ENCODE measurements at regions of chr4 and their contacts with region 1.

Region 1: DNA sequence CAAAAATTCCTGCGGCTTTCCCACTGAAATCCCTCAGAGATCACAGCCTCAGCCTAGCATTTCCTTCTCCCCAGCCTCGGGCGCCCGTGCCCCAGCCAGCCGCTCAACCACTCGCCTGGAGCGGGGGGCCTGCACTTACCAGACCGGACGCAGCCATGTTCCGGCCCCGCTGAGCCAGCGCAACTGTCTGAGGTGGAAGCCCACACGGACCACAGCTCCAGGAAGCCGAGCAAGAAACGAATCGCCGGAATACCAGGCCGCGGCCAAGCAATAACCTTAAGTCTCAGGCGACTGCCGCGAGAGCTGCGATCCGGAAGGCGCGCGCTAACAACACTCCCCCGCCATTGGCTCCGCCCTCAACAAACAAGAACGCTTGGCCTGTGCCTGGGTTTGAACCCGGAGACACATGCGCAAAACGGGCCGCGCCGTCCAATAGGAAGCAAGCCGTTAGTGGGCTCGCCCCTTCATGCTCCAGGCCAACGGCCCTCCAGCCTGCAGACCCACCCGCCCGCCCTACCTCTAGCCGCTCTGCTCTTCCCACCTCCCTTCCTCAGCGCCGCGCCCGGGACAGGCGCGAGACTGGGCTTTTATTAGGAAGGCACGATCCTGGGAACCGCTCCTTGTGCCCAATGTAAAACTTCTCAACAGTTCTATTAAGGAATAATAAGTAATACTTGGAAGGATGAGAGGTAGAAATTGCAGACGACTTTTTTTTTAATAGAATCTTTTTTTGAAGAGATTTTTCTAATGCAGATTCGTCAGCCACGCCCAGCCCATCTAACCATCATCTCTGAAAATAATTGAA is at the start of gene CENPC:
- DNase-seq: peak; percentile 95
- H3K4me3 Mint-ChIP-seq: peak within 1 kb of the TSS; percentile 89
- H3K27ac Mint-ChIP-seq: peak within 1 kb of the TSS; percentile 91
- H3K4me1 Mint-ChIP-seq: peaks cover 38% of the 10 kb centered on the region
- H3K27me3 Mint-ChIP-seq: no peaks in the 10 kb centered on the region
- total RNA-seq, gene CENPC: 36.4 to 36.7 TPM

Region 2: DNA sequence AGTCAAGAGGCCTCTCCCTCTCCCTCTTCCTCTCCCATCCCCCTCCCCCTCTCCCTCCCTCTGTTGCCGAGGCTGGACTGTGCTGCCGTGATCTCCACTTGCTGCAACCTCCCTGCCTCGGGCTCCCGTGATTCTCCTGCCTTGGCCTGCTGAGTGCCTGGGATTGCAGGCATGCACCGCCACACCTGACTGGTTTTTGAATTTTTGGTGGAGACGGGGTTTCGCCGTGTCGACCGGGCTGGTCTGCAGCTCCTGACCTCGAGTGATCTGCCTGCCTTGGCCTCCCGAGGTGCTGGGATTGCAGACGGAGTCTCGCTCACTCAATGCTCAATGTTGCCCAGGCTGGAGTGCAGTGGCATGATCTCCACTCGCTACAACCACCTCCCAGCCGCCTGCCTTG is 165.2 kb before region 1 on chr4:
- CTCF ChIA-PET with region 1: no interaction called
- POLR2A ChIA-PET with region 1: no interaction called
- DNase-seq: no peak
- H3K4me3 Mint-ChIP-seq: no peak overlapping the region
- H3K27ac Mint-ChIP-seq: no peak overlapping the region
- H3K4me1 Mint-ChIP-seq: no peaks in the 10 kb centered on the region
- H3K27me3 Mint-ChIP-seq: peaks cover 1% of the 10 kb centered on the region

Region 3: GRCh38 chr4:67522851-67523671 is 22.3 kb before region 1 on chr4:
- CTCF ChIA-PET with region 1: interaction called, 5 read pairs
- POLR2A ChIA-PET with region 1: interaction called, 12 read pairs
- DNase-seq: peak; percentile 37
- H3K4me3 Mint-ChIP-seq: no peak overlapping the region
- H3K27ac Mint-ChIP-seq: peak overlapping the region; percentile 97
- H3K4me1 Mint-ChIP-seq: peaks cover 57% of the 10 kb centered on the region
- H3K27me3 Mint-ChIP-seq: no peaks in the 10 kb centered on the region

Region 4: GRCh38 chr4:67700738-67701516 is 155.5 kb after region 1 on chr4 and contains the start of gene UBA6:
- CTCF ChIA-PET with region 1: interaction called, 5 read pairs
- POLR2A ChIA-PET with region 1: interaction called, 48 read pairs
- DNase-seq: peak; percentile 96
- H3K4me3 Mint-ChIP-seq: peak within 1 kb of the TSS; percentile 96
- H3K27ac Mint-ChIP-seq: peak within 1 kb of the TSS; percentile 97
- H3K4me1 Mint-ChIP-seq: peaks cover 64% of the 10 kb centered on the region
- H3K27me3 Mint-ChIP-seq: no peaks in the 10 kb centered on the region
- total RNA-seq, gene UBA6: 116 to 117 TPM

Measured in activated CD4-positive, alpha-beta memory T cell treated with anti-CD3 and anti-CD28 coated beads, Interleukin-2, amount 10 ng/mL, durations not matched to agents 7 days and 5 days (primary cell).